ENCODE measurements at regions of chr10 and their contacts with region 1.

Region 1: DNA sequence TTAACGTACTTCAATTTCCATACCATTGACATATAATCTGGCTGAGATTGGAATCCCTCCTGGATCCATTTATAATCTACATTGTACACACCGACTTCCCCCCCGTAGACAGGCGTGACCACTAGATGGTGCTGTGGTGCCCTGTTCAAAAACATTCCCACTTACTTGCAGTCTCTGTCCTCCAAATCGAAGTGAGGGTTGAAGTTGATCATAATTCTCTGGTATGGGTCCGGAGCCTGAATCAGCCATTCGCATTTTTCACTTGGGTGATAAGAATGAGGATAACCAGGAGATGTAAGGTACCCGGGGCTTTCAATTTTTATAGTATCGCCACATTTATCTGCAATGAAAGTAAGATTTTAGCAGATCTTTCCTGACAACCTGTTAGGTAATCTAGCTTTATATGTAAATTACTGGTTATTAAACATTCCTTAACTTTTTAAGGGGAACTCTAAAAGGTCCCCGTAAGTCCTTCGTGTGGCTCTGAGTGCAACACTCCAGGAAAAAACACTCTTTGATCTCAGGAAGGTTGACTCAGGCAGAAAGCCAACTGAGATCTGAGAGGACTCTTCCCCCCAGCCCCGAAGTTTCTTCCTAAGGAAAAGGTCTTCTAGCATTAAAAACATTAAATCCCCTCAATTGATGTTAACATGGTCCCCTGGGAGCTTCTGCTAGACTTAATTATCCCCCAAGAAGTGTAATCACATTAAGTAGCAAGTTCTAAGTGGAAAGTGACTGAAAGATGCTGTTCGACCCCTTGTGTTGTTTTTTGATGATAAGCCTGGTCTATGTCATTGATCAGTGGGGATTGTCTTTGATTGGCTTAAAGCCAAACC is 3.7 kb downstream of the NRP1 start:
- DNase-seq: peak; percentile 32
- ATAC-seq: peak; percentile 37
- H3K4me3 Mint-ChIP-seq: no peak overlapping the region
- H3K27ac Mint-ChIP-seq: no peak overlapping the region
- H3K4me1 Mint-ChIP-seq: peaks cover 14% of the 10 kb centered on the region
- H3K27me3 Mint-ChIP-seq: peaks cover 38% of the 10 kb centered on the region
- CTCF ChIP-seq: peak; percentile 60

Region 2: GRCh38 chr10:32795598-32796183 is 535.1 kb before region 1 on chr10:
- CTCF ChIA-PET with region 1: no interaction called
- POLR2A ChIA-PET with region 1: no interaction called
- intact Hi-C with region 1: loop called (anchors 2 kb)
- DNase-seq: no peak
- ATAC-seq: peak; percentile 45
- H3K4me3 Mint-ChIP-seq: no peak overlapping the region
- H3K27ac Mint-ChIP-seq: no peak overlapping the region
- H3K4me1 Mint-ChIP-seq: no peaks in the 10 kb centered on the region
- H3K27me3 Mint-ChIP-seq: no peaks in the 10 kb centered on the region
- CTCF ChIP-seq: peak; percentile 36

Region 3: GRCh38 chr10:33291053-33291592 is 39.6 kb before region 1 on chr10:
- CTCF ChIA-PET with region 1: no interaction called
- POLR2A ChIA-PET with region 1: no interaction called
- intact Hi-C with region 1: no loop called
- DNase-seq: no peak
- ATAC-seq: no peak
- H3K4me3 Mint-ChIP-seq: no peak overlapping the region
- H3K27ac Mint-ChIP-seq: no peak overlapping the region
- H3K4me1 Mint-ChIP-seq: no peaks in the 10 kb centered on the region
- H3K27me3 Mint-ChIP-seq: peaks cover 3% of the 10 kb centered on the region
- CTCF ChIP-seq: no peak

Region 4: DNA sequence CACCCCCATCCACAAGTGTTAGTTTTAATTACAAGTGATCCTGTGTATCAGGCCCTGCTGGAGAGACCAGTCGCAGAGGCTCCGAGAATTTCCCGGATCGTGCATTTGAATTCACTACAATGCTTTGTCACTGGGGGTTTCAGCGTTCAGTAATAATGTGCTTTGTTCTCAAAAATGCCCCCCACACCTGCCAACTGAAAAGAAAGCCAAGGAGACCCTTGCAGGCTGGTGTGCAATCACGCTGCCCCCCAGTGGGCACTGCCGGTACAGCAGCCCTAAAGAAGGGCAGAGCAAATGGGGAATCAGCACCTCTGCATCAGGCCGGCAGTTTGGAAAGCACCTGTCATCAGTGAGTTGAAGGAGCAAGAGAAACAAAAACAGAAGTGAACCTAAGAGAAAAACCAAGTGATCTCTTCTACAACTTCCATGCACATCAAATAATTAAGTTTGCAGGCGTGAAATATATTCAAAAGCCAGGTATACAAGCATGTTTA is 1306.7 kb after region 1 on chr10:
- CTCF ChIA-PET with region 1: interaction called, 6 read pairs
- POLR2A ChIA-PET with region 1: no interaction called
- intact Hi-C with region 1: loop called (anchors 1 kb)
- DNase-seq: peak; percentile 44
- ATAC-seq: peak; percentile 88
- H3K4me3 Mint-ChIP-seq: peak overlapping the region; percentile 21
- H3K27ac Mint-ChIP-seq: no peak overlapping the region
- H3K4me1 Mint-ChIP-seq: peaks cover 20% of the 10 kb centered on the region
- H3K27me3 Mint-ChIP-seq: peaks cover 3% of the 10 kb centered on the region
- CTCF ChIP-seq: peak; percentile 51